ENCODE measurements at regions of chr22 and their contacts with region 1.

Region 1: DNA sequence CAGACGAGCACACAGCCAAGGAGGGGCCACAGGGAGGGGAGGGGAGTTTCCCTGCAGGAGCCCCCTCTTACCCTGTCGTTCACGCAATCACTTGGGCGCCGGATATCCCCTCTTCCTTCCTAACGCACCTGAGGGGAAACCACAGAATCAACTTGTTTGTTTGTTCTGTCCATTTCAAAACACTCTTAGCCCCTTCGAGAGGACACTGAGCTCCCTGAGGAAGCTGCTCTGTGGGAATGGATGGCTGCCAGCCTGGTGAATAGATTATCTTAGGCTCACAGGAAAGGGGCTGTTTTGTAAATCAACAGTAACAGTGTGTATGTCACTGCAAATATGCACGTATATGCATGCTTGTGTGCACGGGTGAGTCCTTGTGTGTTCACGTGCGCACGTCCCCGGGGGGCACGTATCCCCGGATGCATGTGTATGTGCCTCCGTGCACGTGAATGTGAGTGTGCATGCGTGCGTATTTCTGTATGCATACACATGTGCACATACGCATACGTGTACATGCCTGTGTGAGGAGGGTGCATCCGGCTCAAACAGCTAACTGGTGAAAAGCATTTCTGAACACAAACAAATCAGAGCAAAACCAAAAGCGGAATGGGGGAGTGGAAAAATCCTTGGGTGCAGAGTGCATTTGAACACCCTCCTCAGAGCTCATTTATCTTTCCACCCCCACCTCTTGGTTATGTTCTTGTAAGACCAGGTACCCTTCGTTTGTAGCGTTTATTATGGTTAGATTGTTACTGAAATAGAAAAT is 7.2 kb downstream of the ARSA start:
- DNase-seq: peak; percentile 96
- ATAC-seq: peak; percentile 71
- H3K4me3 Mint-ChIP-seq: peak overlapping the region; percentile 84
- H3K27ac Mint-ChIP-seq: peak overlapping the region; percentile 99
- H3K4me1 Mint-ChIP-seq: peaks cover 35% of the 10 kb centered on the region
- H3K27me3 Mint-ChIP-seq: no peaks in the 10 kb centered on the region
- CTCF ChIP-seq: peak; percentile 53

Region 2: GRCh38 chr22:50507991-50508884 is 112.5 kb before region 1 on chr22 and contains the start of gene NCAPH2:
- CTCF ChIA-PET with region 1: interaction called, 10 read pairs
- POLR2A ChIA-PET with region 1: interaction called, 14 read pairs
- intact Hi-C with region 1: no loop called
- DNase-seq: peak; percentile 98
- ATAC-seq: peak; percentile 36
- H3K4me3 Mint-ChIP-seq: peak within 1 kb of the TSS; percentile 98
- H3K27ac Mint-ChIP-seq: peak within 1 kb of the TSS; percentile 97
- H3K4me1 Mint-ChIP-seq: peaks cover 22% of the 10 kb centered on the region
- H3K27me3 Mint-ChIP-seq: no peaks in the 10 kb centered on the region
- CTCF ChIP-seq: no peak
- total RNA-seq, gene NCAPH2: 121 to 126 TPM

Region 3: GRCh38 chr22:50537765-50538164 is 83.0 kb before region 1 on chr22:
- CTCF ChIA-PET with region 1: interaction called, 22 read pairs
- POLR2A ChIA-PET with region 1: interaction called, 34 read pairs
- intact Hi-C with region 1: loop called (anchors 2 kb)
- DNase-seq: no peak
- ATAC-seq: no peak
- H3K4me3 Mint-ChIP-seq: no peak overlapping the region
- H3K27ac Mint-ChIP-seq: peak overlapping the region; percentile 100
- H3K4me1 Mint-ChIP-seq: peaks cover 60% of the 10 kb centered on the region
- H3K27me3 Mint-ChIP-seq: no peaks in the 10 kb centered on the region
- CTCF ChIP-seq: no peak

Region 4: DNA sequence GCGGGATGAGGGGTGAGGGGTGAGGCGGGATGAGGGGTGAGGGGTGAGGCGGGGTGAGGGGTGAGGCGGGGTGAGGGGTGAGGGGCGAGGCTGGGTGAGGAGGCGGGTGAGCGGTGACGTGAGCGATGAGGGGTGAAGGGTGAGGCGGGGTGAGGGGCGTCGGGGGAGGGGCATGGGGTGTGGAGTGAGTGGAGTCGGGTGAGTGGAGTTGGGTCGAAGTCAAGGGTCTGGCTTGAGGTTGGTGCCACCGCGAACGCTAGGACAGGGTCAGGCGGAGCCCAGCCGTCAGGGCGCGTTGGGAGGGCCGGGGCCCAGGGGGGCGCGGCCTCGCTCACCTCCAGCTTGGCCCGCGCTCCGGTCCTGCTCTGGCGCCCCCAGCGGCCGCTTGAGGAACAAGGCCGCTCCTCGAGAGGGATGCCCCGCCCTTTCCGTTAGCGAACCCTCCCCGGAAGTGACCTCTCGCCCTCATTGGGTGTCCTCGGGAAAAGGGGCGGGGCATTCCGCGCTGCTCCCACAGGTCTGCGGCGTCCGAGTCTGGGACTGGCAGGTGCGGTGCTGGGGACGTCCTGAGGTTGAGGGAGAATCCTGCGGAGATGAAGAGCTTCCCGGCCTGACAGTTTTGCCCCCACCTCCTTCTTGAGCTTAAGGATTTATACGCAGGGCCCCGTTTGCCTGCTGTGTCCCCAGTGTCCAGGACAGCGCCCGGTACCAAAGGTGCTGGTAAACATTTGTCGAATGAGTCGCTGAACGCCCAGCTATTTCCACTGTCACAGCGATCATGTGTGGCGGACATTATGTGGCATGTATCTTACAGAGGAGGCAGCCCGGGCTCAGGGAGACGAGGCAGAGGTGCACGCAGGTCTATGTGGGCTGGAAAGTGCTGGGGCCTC is 58.0 kb before region 1 on chr22 and contains the start of gene SYCE3:
- CTCF ChIA-PET with region 1: interaction called, 30 read pairs
- POLR2A ChIA-PET with region 1: interaction called, 4 read pairs
- intact Hi-C with region 1: no loop called
- DNase-seq: peak; percentile 98
- ATAC-seq: peak; percentile 99
- H3K4me3 Mint-ChIP-seq: peak within 1 kb of the TSS; percentile 83
- H3K27ac Mint-ChIP-seq: peak within 1 kb of the TSS; percentile 47
- H3K4me1 Mint-ChIP-seq: peaks cover 15% of the 10 kb centered on the region
- H3K27me3 Mint-ChIP-seq: no peaks in the 10 kb centered on the region
- CTCF ChIP-seq: peak; percentile 82
- total RNA-seq, gene SYCE3: not detected